ENCODE measurements at regions of chr7 and their contacts with region 1.

Region 1: GRCh38 chr7:20407585-20408461 is 77.1 kb downstream of the ITGB8 start:
- DNase-seq: peak; percentile 84
- H3K4me3 Mint-ChIP-seq: peak overlapping the region; percentile 19
- H3K27ac Mint-ChIP-seq: peak overlapping the region; percentile 90
- H3K4me1 Mint-ChIP-seq: peaks cover 23% of the 10 kb centered on the region
- H3K27me3 Mint-ChIP-seq: no peaks in the 10 kb centered on the region
- CTCF ChIP-seq: no peak

Region 2: DNA sequence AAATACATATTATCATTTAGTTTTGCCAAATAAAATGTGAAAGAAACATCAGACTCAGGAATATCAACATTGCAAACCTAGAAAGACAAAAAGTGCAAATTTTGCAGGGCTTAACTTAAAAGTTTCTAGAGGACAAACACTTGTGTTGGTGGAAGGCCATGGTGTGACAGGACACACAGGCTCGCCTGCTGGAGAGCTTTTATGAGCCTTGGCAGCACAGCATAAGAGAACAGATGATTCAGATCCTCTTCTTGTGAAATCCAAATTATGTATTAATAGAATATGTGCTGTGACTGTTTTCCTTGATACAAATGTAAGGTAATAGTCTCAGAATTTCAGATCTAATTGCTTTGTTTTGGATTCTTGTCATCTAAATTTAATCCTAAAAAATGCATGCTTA is 134.8 kb after region 1 on chr7:
- CTCF ChIA-PET with region 1: no interaction called
- POLR2A ChIA-PET with region 1: interaction called, 14 read pairs
- intact Hi-C with region 1: no loop called
- DNase-seq: peak; percentile 79
- H3K4me3 Mint-ChIP-seq: no peak overlapping the region
- H3K27ac Mint-ChIP-seq: no peak overlapping the region
- H3K4me1 Mint-ChIP-seq: peaks cover 23% of the 10 kb centered on the region
- H3K27me3 Mint-ChIP-seq: no peaks in the 10 kb centered on the region
- CTCF ChIP-seq: no peak

Measured in MCF 10A (cell line).